SK-N-SH (cell line): ENCODE measurements at regions of chr1 and their contacts with region 1.

Region 1: DNA sequence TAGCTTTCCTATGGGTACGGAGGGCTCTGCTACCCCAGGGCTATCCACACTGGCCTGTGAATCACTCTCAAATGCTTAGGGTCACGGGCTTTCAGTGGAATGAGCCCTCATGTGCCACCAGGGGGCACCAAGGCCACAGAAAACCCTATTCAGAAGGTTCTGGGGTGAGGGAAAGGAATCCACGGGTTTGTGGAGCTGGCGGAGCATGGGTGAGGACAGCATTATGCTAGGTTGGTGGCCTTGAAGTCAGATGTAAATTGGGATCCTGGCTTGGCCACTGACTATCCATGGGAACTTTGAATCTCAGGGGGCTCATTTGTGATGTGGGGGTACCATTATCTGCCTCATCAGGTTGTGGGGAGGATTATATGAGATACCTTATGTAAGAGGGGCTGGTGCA is 5.1 kb upstream of the LAMTOR5 start:
- DNase-seq: peak; percentile 78
- H3K4me3 ChIP-seq: no peak overlapping the region; a peak in 1 of 4 replicates
- H3K27ac ChIP-seq: no peak overlapping the region
- H3K4me1 ChIP-seq: peaks cover 3 to 7% of the 10 kb centered on the region in 2 experiments; a peak in 1 of 4 replicates
- H3K27me3 ChIP-seq: no peaks in the 10 kb centered on the region
- CTCF ChIP-seq: peak; percentile 79
- EP300 ChIP-seq: no peak
- RAD21 ChIP-seq: peak; percentile 82

Region 2: GRCh38 chr1:110196917-110197765 is 215.4 kb before region 1 on chr1:
- CTCF ChIA-PET with region 1: interaction called, 33 read pairs
- POLR2A ChIA-PET with region 1: no interaction called
- DNase-seq: peak; percentile 89
- H3K4me3 ChIP-seq: peak overlapping the region in 1 of 2 experiments; percentile 11; a peak in 1 of 4 replicates
- H3K27ac ChIP-seq: no peak overlapping the region; a peak in 1 of 4 replicates
- H3K4me1 ChIP-seq: peaks cover 0 to 20% of the 10 kb centered on the region in 2 experiments; a peak in 1 of 4 replicates
- H3K27me3 ChIP-seq: no peaks in the 10 kb centered on the region
- CTCF ChIP-seq: peak; percentile 90
- EP300 ChIP-seq: no peak
- RAD21 ChIP-seq: peak; percentile 68

Region 3: DNA sequence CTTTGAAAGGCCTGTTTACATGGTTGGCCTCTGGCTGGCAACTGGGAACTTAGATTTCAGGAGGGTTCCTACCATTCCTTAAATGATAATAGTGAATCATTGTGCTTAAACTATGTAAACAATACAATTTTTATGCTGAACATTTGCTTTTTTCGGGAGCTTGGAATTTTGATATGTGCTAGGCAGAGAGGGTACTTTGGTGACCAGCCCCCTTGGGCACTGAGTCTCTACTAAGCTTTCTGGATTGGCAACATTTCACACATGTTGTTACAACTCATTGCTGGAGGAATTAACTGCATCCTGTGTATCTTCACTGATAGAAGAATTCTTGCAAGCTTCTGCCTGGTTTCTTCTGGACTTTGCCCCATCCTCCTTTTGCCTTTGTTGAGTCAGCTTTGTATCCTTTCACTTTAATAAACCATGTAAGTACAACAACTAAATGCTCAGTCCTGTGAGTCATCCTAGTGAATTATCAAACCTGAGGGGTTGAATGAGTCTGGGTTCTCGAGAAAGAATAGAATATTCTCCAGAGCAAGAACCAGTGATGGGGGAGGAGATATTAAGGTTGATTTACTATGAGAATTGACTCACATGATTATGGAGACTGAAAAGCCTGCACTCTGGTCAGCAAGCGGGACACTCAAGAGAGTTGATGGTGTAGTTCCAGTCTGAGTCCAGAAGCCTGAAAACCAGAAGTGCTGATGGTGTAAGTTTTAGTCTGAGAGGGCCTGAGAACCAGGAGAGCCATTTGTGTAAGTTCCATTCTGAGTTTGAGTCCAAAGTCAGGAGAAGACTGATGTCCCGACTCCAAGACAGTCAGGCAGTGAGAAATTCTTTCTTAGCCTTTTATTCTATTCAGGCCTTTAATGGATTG is 18.6 kb before region 1 on chr1:
- CTCF ChIA-PET with region 1: interaction called, 10 read pairs
- POLR2A ChIA-PET with region 1: no interaction called
- DNase-seq: no peak
- H3K4me3 ChIP-seq: no peak overlapping the region
- H3K27ac ChIP-seq: peak overlapping the region in 1 of 2 experiments; percentile 45; a peak in 2 of 4 replicates
- H3K4me1 ChIP-seq: peaks cover 5 to 6% of the 10 kb centered on the region in 2 experiments; a peak in 1 of 4 replicates
- H3K27me3 ChIP-seq: no peaks in the 10 kb centered on the region
- CTCF ChIP-seq: no peak
- EP300 ChIP-seq: no peak
- RAD21 ChIP-seq: no peak

Region 4: GRCh38 chr1:110440877-110441276 is 28.3 kb after region 1 on chr1:
- CTCF ChIA-PET with region 1: interaction called, 16 read pairs
- POLR2A ChIA-PET with region 1: no interaction called
- DNase-seq: no peak
- H3K4me3 ChIP-seq: no peak overlapping the region
- H3K27ac ChIP-seq: no peak overlapping the region
- H3K4me1 ChIP-seq: no peaks in the 10 kb centered on the region
- H3K27me3 ChIP-seq: peaks cover 17% of the 10 kb centered on the region; the same call in 1 of the 2 replicates
- CTCF ChIP-seq: no peak
- EP300 ChIP-seq: no peak
- RAD21 ChIP-seq: no peak

Region 5: GRCh38 chr1:110490791-110491451 is 78.3 kb after region 1 on chr1:
- CTCF ChIA-PET with region 1: interaction called, 135 read pairs
- POLR2A ChIA-PET with region 1: interaction called, 3 read pairs
- DNase-seq: no peak
- H3K4me3 ChIP-seq: no peak overlapping the region
- H3K27ac ChIP-seq: no peak overlapping the region
- H3K4me1 ChIP-seq: no peaks in the 10 kb centered on the region
- H3K27me3 ChIP-seq: no peaks in the 10 kb centered on the region
- CTCF ChIP-seq: no peak
- EP300 ChIP-seq: no peak
- RAD21 ChIP-seq: no peak